ENCODE measurements at regions of chr20 and their contacts with region 1.

Region 1: DNA sequence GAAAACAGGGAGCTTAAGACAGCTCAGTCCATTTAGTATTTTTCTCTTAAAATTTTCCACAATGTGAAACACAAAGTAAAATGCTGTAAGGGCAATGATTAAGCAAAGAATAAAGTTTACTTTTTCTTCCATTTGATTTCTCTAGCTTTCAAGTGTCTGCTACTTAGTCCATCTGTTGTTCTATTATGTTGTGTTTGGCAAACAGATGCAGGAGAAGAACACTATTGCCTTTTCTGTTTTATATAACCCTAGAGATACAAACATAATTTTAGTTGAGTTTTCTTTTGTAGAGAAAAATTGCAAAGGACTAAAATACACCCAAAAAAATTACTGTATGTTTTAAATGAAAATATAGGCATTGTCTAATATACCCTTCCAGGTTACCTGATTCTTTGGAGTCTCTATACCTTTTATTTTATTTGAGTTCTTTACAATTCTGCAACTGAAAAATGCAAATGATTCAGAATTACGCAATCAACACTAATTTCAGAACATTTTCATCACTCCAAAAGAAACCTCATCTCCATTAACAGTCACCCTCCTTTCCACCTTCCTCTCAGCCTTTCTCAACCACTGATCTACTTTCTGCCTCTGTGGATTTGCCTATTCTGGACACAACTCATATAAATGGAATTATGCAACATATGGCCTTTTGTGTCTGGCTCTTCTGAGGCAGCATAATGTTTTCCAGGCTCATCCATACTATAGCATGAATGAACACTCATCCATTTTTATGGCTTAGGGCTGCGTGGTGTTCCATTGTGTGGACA is 96.9 kb downstream of the MKKS start:
- DNase-seq: no peak
- H3K4me3 Mint-ChIP-seq: no peak overlapping the region
- H3K27ac Mint-ChIP-seq: no peak overlapping the region
- H3K4me1 Mint-ChIP-seq: peaks cover 13% of the 10 kb centered on the region
- H3K27me3 Mint-ChIP-seq: peaks cover 5% of the 10 kb centered on the region

Region 2: DNA sequence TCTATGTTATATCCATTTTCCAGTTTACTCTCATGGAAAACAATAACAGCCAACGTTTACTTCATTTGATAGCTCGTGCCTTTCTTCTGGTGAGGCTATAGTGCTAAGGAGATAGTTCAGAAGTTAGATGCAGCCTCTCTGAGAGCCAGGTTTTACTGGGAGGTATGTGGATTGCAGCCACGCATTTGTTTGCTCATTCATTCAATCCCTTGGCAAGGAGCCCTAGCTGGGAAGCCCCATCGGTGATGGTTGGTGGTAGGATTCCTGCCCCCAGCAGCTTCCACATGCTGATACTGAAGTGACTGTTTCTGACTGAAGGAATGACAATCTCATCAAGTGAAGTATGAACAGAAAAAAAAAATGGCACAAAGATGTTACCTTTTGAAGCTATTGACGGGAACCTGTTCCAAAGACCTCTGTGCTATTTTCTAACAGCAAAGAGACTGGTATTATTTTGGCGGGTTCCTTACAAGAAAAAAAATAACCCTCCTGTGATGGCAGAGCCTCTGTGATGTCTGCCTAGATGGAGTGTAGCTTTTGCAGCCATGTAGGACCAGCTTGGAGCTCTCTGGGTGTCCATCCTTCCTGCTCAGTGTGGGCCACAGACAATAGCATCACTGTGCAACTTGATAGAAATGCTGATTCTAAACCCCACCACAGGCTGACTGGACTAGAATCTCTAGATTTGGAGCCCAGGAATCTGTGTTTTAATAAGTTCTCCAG is 87.9 kb before region 1 on chr20:
- CTCF ChIA-PET with region 1: no interaction called
- POLR2A ChIA-PET with region 1: no interaction called
- intact Hi-C with region 1: no loop called
- DNase-seq: no peak
- H3K4me3 Mint-ChIP-seq: no peak overlapping the region
- H3K27ac Mint-ChIP-seq: no peak overlapping the region
- H3K4me1 Mint-ChIP-seq: no peaks in the 10 kb centered on the region
- H3K27me3 Mint-ChIP-seq: no peaks in the 10 kb centered on the region

Region 3: GRCh38 chr20:10322073-10323012 is 14.8 kb before region 1 on chr20:
- CTCF ChIA-PET with region 1: no interaction called
- POLR2A ChIA-PET with region 1: no interaction called
- intact Hi-C with region 1: no loop called
- DNase-seq: no peak
- H3K4me3 Mint-ChIP-seq: no peak overlapping the region
- H3K27ac Mint-ChIP-seq: no peak overlapping the region
- H3K4me1 Mint-ChIP-seq: peaks cover 4% of the 10 kb centered on the region
- H3K27me3 Mint-ChIP-seq: peaks cover 14% of the 10 kb centered on the region

Region 4: DNA sequence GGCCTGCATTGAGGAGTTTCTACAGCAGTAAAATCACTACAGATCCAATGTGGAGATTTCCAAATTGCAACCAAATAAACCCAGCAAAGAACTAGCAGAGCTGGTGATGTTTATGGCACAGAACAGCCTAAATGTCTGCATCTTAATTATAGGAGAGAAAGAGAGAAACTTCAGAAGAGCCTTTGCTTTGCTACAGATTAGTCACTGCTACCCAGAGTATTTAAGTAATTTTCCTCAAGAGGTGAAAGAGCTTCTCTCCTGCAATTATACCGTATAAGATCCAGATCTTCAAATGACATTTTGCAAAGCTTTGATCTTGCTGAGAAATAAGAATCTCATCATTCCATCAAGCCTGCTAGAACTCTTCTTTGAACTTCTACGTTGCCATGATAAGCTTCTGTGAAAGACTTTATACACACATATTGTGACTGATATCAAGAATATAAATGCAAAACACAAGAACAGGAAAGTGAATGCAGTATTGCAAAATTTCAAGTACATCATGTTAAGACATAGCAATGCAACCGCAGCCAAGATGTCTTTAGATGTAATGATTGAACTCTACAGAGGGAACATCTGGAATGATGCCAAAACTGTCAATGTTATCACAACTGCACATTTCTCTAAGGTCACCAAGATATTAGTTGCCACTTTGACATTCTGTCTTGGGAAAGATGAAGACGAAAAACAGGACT is 48.9 kb after region 1 on chr20:
- CTCF ChIA-PET with region 1: no interaction called
- POLR2A ChIA-PET with region 1: no interaction called
- intact Hi-C with region 1: no loop called
- DNase-seq: no peak
- H3K4me3 Mint-ChIP-seq: no peak overlapping the region
- H3K27ac Mint-ChIP-seq: no peak overlapping the region
- H3K4me1 Mint-ChIP-seq: peaks cover 4% of the 10 kb centered on the region
- H3K27me3 Mint-ChIP-seq: no peaks in the 10 kb centered on the region

Region 5: DNA sequence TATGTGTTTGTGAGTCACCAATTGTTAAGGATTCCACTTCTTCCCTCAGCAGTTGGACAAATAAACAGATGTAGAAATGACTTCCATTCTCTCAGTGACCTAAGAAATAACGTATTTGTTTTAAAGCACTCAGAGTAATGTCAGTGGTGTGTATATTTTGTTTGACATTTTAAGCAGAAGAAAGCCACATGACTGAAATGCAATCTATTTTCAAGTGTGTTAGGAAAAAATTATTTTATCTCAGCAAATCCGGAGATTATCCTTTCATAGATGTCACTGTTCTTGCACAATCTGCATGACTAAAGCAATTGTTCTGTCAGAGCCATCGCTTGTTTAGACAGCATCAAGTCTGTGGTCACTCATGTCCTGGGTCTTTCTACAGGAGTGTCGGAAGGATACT is 259.6 kb after region 1 on chr20:
- CTCF ChIA-PET with region 1: no interaction called
- POLR2A ChIA-PET with region 1: no interaction called
- intact Hi-C with region 1: loop called (anchors 5 kb)
- DNase-seq: no peak
- H3K4me3 Mint-ChIP-seq: no peak overlapping the region
- H3K27ac Mint-ChIP-seq: no peak overlapping the region
- H3K4me1 Mint-ChIP-seq: peaks cover 12% of the 10 kb centered on the region
- H3K27me3 Mint-ChIP-seq: no peaks in the 10 kb centered on the region

Measured in activated CD4-positive, alpha-beta memory T cell treated with anti-CD3 and anti-CD28 coated beads for 36 hours (primary cell).